ENCODE measurements at regions of chr2 and their contacts with region 1.

Region 1: DNA sequence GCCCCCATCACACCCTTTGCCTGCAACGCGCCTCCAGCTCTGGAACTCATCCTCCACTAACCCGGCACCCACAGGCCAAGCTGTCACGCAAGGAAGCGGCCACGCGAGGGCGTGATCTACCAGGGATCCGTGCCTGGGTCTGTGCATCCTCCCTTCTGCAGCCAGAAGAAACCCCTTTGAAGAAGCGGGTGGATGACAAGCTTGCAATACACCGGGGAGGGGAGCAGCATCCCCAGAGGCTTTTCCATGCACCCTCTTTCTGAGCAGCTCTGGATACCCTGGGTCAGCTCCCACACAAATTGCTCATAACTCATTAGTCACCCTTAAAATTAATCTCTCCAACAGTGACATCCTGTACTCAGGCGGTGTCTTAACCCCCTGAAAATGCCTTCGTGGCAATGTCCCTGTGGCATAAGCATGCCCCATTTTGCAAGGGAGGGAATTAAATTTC is 47.6 kb downstream of the PDCL3 start:
- DNase-seq: peak; percentile 49
- ATAC-seq: peak; percentile 93
- H3K4me3 ChIP-seq: no peak overlapping the region
- H3K27ac ChIP-seq: no peak overlapping the region
- H3K4me1 ChIP-seq: no peaks in the 10 kb centered on the region
- H3K27me3 ChIP-seq: peaks cover 20% of the 10 kb centered on the region
- CTCF ChIP-seq: peak; percentile 64
- POLR2A ChIP-seq: 0 out of 2 replicates have a peak, but pooled peaks have one; percentile 23
- RAD21 ChIP-seq: peak; percentile 83

Region 2: DNA sequence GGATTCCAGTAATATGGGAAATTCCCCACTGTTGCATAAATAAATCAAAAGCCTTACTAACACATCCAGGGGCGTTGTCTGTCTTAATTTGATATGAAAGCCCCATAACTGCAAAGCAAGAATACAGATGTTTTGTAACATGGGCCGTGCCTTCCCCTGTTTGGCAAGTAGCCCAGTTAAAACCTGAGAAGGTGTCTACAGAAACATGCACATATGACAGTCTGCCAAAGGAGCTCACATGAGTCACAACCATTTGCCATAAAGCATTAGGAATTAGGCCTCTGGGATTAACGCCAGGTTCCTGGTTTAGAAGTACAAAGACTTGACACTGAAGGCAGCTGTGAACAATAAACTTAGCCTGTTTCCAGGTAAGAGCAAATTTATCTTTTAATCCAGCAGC is 245.0 kb before region 1 on chr2:
- CTCF ChIA-PET with region 1: no interaction called
- POLR2A ChIA-PET with region 1: no interaction called
- dilution Hi-C with region 1: no loop called
- in situ Hi-C with region 1: no loop called
- intact Hi-C with region 1: no loop called
- DNase-seq: peak; percentile 93
- ATAC-seq: no peak
- H3K4me3 ChIP-seq: no peak overlapping the region
- H3K27ac ChIP-seq: no peak overlapping the region
- H3K4me1 ChIP-seq: no peaks in the 10 kb centered on the region
- H3K27me3 ChIP-seq: peaks cover 4% of the 10 kb centered on the region
- CTCF ChIP-seq: no peak
- POLR2A ChIP-seq: no peak
- RAD21 ChIP-seq: no peak

Region 3: DNA sequence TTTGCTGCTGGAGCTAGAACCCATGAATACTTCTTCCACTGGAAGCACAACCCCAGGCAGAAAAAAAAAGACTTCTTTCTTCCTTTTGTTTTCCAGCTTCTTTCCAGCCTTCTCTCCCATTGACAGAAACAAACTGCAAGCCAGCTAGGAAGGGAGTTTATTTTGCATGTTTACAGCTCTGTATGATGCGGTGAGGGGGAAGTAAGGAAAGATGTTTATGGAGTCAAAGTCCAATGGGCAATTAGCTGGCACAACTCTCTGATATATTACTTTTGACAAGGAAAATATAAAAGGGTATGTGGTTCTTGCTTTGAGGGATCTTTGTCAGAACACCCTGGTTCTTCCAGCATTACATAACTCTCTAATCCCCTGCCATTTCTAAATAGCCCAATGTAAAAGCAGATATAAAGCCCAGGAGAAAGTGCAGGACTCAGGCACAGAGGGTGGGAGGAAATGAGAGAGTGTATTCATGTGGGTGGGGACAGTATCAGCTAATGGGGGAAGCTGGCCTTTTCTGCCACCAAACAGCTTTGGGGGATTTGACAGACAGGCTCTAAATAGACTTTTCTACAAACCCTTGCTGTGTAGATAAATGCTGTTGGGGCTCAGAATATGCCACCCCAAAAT is 149.4 kb before region 1 on chr2:
- CTCF ChIA-PET with region 1: no interaction called
- POLR2A ChIA-PET with region 1: no interaction called
- dilution Hi-C with region 1: no loop called
- in situ Hi-C with region 1: no loop called
- intact Hi-C with region 1: no loop called
- DNase-seq: no peak
- ATAC-seq: no peak
- H3K4me3 ChIP-seq: no peak overlapping the region
- H3K27ac ChIP-seq: no peak overlapping the region
- H3K4me1 ChIP-seq: no peaks in the 10 kb centered on the region
- H3K27me3 ChIP-seq: no peaks in the 10 kb centered on the region
- CTCF ChIP-seq: no peak
- POLR2A ChIP-seq: no peak
- RAD21 ChIP-seq: no peak

Region 4: GRCh38 chr2:100984892-100985379 is 374.5 kb after region 1 on chr2:
- CTCF ChIA-PET with region 1: interaction called, 3 read pairs
- POLR2A ChIA-PET with region 1: no interaction called
- dilution Hi-C with region 1: no loop called
- in situ Hi-C with region 1: loop called (anchors 5 kb)
- intact Hi-C with region 1: loop called (anchors 1 kb)
- DNase-seq: peak; percentile 69
- ATAC-seq: peak; percentile 82
- H3K4me3 ChIP-seq: no peak overlapping the region
- H3K27ac ChIP-seq: no peak overlapping the region
- H3K4me1 ChIP-seq: 0 out of 2 replicates have a peak, but pooled peaks cover 2% of the 10 kb centered on the region
- H3K27me3 ChIP-seq: no peaks in the 10 kb centered on the region
- CTCF ChIP-seq: peak; percentile 87
- POLR2A ChIP-seq: no peak
- RAD21 ChIP-seq: peak; percentile 96

Region 5: DNA sequence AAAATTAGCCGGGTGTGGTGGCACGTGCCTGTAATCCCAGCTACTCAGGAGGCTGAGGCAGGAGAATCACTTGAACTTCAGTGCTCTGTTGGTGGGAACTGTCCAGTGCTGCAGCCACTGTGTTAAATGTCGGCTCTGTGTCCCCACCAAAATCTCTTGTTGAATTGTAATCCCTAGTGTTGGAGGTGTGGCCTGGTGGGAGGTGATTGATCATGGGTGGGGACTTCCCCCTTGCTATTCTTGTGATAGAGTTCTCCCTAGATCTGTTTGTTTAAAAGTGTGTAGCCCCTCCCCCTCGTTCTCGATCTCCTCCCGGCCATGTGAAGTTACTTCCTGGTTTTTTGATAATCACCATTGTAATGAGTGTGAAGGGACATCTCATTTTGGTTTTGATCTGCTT is 381.9 kb after region 1 on chr2:
- CTCF ChIA-PET with region 1: no interaction called
- POLR2A ChIA-PET with region 1: no interaction called
- dilution Hi-C with region 1: no loop called
- in situ Hi-C with region 1: loop called (anchors 5 kb)
- intact Hi-C with region 1: no loop called
- DNase-seq: no peak
- ATAC-seq: no peak
- H3K4me3 ChIP-seq: no peak overlapping the region
- H3K27ac ChIP-seq: no peak overlapping the region
- H3K4me1 ChIP-seq: no peaks in the 10 kb centered on the region
- H3K27me3 ChIP-seq: no peaks in the 10 kb centered on the region
- CTCF ChIP-seq: no peak
- POLR2A ChIP-seq: no peak
- RAD21 ChIP-seq: no peak

Region 6: GRCh38 chr2:101205521-101205998 is 595.2 kb after region 1 on chr2:
- CTCF ChIA-PET with region 1: interaction called, 5 read pairs
- POLR2A ChIA-PET with region 1: no interaction called
- dilution Hi-C with region 1: no loop called
- in situ Hi-C with region 1: loop called (anchors 25 kb)
- intact Hi-C with region 1: loop called (anchors 5 kb)
- DNase-seq: peak; percentile 80
- ATAC-seq: peak; percentile 99
- H3K4me3 ChIP-seq: no peak overlapping the region
- H3K27ac ChIP-seq: no peak overlapping the region
- H3K4me1 ChIP-seq: no peaks in the 10 kb centered on the region; the same call in 1 of the 2 replicates
- H3K27me3 ChIP-seq: no peaks in the 10 kb centered on the region
- CTCF ChIP-seq: peak; percentile 77
- POLR2A ChIP-seq: no peak
- RAD21 ChIP-seq: peak; percentile 75

Region 7: DNA sequence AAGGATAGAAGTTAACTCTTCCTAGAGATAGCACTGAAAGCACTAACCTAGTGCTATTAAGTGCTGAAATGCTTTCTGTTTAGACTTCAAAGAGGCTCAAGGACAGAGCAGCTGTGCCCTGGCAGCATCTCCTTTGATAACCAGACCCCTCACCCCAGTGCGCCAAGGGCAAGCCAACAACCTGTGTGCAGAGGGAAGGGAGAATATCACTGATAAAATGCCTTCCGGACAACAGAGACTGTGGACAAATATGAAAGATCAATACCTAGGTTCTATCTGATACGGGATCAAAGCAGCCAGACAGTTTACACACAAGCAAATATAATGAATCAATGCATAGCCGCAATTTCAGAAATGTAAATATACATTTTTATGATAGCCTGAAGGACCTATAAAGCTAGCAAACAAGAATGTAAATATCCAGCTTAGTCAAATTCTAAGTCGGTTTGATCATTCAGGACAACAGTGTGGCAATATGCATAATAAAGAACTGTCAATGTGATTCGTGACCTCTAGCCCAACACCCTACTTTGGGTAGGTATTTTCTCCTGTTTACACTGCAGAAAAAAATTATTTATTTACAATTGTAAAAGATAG is 956.3 kb after region 1 on chr2:
- CTCF ChIA-PET with region 1: no interaction called
- POLR2A ChIA-PET with region 1: no interaction called
- dilution Hi-C with region 1: no loop called
- in situ Hi-C with region 1: no loop called
- intact Hi-C with region 1: no loop called
- DNase-seq: no peak
- ATAC-seq: no peak
- H3K4me3 ChIP-seq: no peak overlapping the region
- H3K27ac ChIP-seq: no peak overlapping the region
- H3K4me1 ChIP-seq: peaks cover 2% of the 10 kb centered on the region; the same call in 1 of the 2 replicates
- H3K27me3 ChIP-seq: peaks cover 15% of the 10 kb centered on the region
- CTCF ChIP-seq: no peak
- POLR2A ChIP-seq: no peak
- RAD21 ChIP-seq: no peak

Measured in IMR-90 (cell line).